ENCODE measurements at regions of chr20 and their contacts with region 1.

Region 1: DNA sequence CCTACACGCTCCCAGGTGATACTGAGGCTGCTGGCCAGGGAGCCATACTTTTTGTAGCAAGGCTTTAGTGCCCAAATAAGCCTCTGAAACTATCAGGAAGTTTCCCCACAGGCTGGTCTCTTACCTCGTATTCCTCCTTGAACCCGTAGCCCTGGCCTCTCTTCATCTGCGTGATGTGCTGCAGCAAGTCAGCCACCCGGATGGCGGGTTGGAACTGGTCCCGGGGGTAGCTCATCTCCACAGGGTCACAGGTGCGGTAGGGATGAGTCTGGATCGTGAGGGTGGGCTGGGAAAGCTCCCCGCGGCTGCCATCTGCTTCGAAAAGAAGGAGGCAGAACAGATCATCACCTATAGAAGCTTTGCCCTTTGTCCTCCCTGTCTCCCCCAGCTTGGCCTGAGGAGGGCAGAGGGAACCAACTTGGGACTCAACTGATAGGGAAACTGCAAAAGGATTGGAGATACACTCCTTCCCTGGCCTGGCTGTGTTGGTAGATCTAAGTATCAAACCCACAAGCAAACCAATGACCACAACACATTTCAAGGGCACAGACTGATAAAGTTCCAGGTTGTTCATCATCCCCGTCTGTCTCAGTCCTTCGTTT is 543.2 kb upstream of the CHD6 start:
- DNase-seq: no peak
- H3K4me3 ChIP-seq: no peak overlapping the region
- H3K27ac ChIP-seq: no peak overlapping the region
- H3K4me1 ChIP-seq: no peaks in the 10 kb centered on the region
- H3K27me3 ChIP-seq: no peaks in the 10 kb centered on the region
- CTCF ChIP-seq: no peak
- EP300 ChIP-seq: no peak
- POLR2A ChIP-seq: no peak

Region 2: DNA sequence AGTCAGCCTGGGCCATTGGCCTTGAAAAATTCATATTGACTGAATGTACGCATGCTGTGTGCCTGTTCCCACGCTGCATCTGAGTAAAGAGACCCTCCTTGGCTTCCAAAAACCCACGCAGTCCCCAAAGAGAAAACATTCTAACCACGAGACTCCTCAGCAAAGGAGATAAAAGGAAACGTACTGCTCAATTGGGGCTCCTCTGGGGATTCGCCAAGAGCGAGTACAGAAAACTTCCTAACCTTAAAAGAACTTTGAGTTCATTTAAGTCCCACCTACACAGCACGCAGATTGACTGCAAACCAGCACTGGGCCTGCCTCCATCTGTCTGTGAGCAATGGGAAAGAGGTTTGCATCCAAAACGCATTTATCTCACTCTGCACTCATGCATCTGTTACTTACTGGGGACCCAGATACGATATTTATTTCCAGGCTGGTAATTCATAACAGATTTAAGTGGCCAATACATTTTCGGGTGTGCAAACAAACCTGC is 37.3 kb before region 1 on chr20:
- intact Hi-C with region 1: no loop called
- DNase-seq: no peak
- H3K4me3 ChIP-seq: no peak overlapping the region
- H3K27ac ChIP-seq: no peak overlapping the region
- H3K4me1 ChIP-seq: no peaks in the 10 kb centered on the region
- H3K27me3 ChIP-seq: no peaks in the 10 kb centered on the region
- CTCF ChIP-seq: no peak
- EP300 ChIP-seq: no peak
- POLR2A ChIP-seq: no peak

Region 3: GRCh38 chr20:42294976-42295375 is 133.6 kb after region 1 on chr20:
- intact Hi-C with region 1: loop called in 1 of 4 experiments (anchors 5 kb)
- DNase-seq: no peak
- H3K4me3 ChIP-seq: no peak overlapping the region
- H3K27ac ChIP-seq: no peak overlapping the region
- H3K4me1 ChIP-seq: no peaks in the 10 kb centered on the region
- H3K27me3 ChIP-seq: no peaks in the 10 kb centered on the region
- CTCF ChIP-seq: no peak
- EP300 ChIP-seq: no peak
- POLR2A ChIP-seq: no peak

Measured in ovary (tissue), 10 donors.